PC-9 (cell line): ENCODE measurements at regions of chr1 and their contacts with region 1.

Region 1: DNA sequence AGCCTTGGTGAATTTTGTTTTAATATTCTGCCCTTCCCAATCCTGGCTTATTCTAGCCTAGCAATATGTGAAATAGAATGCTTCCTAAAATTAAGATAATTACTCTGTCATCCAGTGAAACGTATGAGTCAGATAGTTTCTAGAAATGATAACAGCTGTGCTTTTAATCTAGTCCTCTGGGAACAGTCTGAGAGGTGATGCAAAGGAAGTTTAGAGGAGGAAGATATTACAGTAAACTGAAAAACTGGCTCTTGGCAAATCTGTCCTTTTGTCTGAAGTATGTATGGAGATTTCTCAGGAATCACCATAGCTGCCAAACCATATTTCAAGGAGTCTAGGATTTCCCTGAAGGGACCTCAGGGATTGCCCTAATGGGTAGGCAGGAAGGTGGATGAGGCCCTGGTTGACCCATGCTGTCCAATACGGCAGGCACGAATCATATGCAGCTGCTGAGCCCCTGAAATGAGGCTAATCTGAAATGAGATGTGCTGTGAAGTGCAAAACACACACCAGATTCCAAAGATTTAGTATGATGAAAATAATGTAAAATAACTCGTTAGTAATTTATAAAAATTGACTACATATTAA is 70.8 kb upstream of the LBR start:
- DNase-seq: no peak
- H3K4me3 ChIP-seq: no peak overlapping the region
- H3K27ac ChIP-seq: no peak overlapping the region
- H3K4me1 ChIP-seq: no peaks in the 10 kb centered on the region
- H3K27me3 ChIP-seq: no peaks in the 10 kb centered on the region
- CTCF ChIP-seq: no peak

Region 2: DNA sequence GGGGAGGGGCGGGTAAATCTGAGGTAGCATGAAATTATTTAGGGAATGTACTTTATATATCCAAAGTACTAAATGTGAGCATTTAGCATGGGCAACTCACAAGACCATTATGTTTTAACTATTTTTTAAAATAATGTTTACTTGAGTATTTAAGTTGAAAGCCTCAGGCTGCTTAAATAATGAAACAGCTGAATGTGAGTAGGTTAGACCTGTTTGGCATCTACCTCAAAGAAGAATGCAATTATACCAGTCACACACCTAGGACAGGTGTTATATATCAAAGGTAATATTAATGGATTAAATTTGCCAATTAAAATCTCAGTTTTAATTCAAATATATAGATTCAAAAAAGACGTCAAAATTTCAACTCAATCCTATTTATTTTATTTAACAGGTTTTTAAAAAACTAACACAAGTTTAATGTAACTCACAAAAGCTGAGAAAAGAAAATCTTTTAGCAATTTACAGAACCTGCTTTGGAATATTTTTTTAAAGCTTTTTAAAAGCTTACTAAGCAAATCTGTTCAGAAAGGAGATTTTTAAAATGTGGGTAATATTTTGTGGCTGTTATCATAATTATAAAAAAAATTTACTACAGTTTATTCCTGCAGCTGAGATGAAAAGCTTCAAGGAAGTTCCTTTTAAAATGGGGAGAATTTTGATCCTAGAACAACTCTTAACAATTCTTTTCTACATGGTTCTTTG is 33.7 kb after region 1 on chr1:
- CTCF ChIA-PET with region 1: no interaction called
- POLR2A ChIA-PET with region 1: interaction called, 14 read pairs
- intact Hi-C with region 1: no loop called
- DNase-seq: peak in 1 of 2 experiments; percentile 75
- H3K4me3 ChIP-seq: no peak overlapping the region
- H3K27ac ChIP-seq: peak overlapping the region; percentile 37; the same call in 1 of the 2 replicates
- H3K4me1 ChIP-seq: peaks cover 29% of the 10 kb centered on the region
- H3K27me3 ChIP-seq: no peaks in the 10 kb centered on the region
- CTCF ChIP-seq: no peak

Region 3: DNA sequence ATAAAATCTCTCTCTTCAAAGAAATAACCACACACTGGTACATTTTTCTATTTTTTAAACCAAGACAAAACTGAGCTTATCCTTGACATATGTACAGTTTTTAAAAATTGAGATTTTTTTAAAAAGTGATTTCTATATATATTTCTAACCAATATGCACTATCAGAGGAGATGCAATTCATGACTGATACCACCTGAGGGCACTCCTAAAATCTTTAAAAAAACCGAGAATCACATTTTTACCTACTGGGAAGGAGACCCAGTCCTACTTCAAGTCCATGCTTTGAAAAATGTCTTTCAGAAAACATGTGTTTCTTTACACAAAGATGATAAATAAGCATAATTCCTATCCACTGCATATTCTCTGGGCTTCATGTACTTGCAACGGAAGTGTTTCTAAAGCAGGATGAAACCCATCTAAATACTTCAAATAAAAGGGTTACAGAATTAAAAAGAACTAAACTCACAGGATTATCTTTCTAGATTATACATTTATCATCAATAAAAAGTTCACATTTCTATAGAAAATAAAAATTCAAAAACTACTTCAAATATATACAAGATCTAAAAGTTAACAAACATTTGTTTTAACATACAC is 55.7 kb after region 1 on chr1:
- CTCF ChIA-PET with region 1: no interaction called
- POLR2A ChIA-PET with region 1: no interaction called
- intact Hi-C with region 1: loop called (anchors 5 kb)
- DNase-seq: no peak
- H3K4me3 ChIP-seq: no peak overlapping the region
- H3K27ac ChIP-seq: 0 out of 2 replicates have a peak overlapping the region, but pooled peaks have one; percentile 25
- H3K4me1 ChIP-seq: no peaks in the 10 kb centered on the region
- H3K27me3 ChIP-seq: no peaks in the 10 kb centered on the region
- CTCF ChIP-seq: peak; percentile 78